ENCODE measurements at regions of chr19 and their contacts with region 1.

Region 1: GRCh38 chr19:9674663-9675357 is at the start of gene ZNF562:
- DNase-seq: peak; percentile 88 to 90
- ATAC-seq: peak; percentile 97 to 99 (median 98)
- H3K4me3 ChIP-seq: peak within 1 kb of the TSS; percentile 55 to 93 (median 74)
- H3K27ac ChIP-seq: peak within 1 kb of the TSS; percentile 84 to 98 (median 96)
- H3K4me1 ChIP-seq: peaks cover 0 to 17% (median 4%) of the 10 kb centered on the region in 9 donors
- H3K27me3 ChIP-seq: no peaks in the 10 kb centered on the region
- CTCF ChIP-seq: no peak
- total RNA-seq, gene ZNF562: 18.8 to 24.3 (median 21.5) TPM

Region 2: GRCh38 chr19:9658769-9659168 is 16.0 kb before region 1 on chr19:
- intact Hi-C with region 1: no loop called
- DNase-seq: no peak
- ATAC-seq: no peak
- H3K4me3 ChIP-seq: no peak overlapping the region
- H3K27ac ChIP-seq: no peak overlapping the region
- H3K4me1 ChIP-seq: peaks cover 0 to 14% (median 0%) of the 10 kb centered on the region in 9 donors
- H3K27me3 ChIP-seq: no peaks in the 10 kb centered on the region
- CTCF ChIP-seq: no peak

Region 3: DNA sequence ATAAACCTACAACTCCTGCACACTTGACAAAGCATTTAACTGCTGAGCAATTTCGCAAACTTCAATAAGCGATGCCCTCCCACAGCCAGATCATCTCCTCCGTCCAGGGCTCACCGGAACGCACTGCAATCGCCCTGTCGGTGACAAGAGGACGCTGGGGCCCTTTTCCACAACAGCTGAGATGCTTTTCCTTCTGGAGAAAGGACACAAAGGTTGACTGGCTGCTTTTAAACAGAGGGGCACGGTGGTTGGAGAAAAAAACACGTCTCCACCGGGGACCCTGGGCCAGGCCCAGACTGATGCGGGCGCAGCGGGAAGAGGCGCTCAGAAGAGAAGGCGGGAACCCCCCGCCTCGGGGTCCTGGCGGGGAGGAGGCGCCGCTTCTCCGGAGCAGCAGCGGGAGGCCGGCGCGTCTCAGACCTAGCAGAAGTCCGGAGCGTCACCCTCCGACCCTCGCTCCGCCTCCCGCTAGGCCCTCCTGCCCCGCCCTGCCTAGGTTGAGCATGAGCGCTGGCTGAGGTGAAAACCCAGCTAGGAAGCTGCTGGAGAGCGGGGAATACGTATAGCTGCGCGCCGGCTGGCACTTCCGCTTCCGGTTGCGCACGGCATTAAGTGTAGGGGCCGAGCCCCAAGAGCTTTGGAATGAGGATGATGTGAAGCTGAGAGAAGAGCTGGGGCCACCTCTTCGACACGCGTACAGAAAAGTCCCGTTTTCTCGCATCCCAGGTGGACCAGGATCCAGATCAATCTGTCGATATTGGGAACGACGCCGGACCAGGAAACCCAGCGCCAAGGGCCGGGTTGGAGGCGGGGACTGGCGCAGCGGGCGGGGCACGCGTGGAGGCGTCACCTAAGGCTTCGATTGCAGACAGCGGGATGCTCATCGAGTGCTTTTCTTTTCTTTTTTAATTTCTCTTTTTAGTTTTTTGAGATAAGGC is 93.6 kb after region 1 on chr19 and contains the start of gene ZNF846:
- intact Hi-C with region 1: loop called in 4 of 10 experiments (anchors 1 to 10 kb)
- DNase-seq: peak; percentile 91 to 94
- ATAC-seq: peak; percentile 98 to 100 (median 99)
- H3K4me3 ChIP-seq: peak within 1 kb of the TSS; percentile 55 to 90 (median 76)
- H3K27ac ChIP-seq: peak within 1 kb of the TSS; percentile 82 to 96 (median 93)
- H3K4me1 ChIP-seq: peaks cover 0 to 19% (median 14%) of the 10 kb centered on the region in 9 donors
- H3K27me3 ChIP-seq: no peaks in the 10 kb centered on the region
- CTCF ChIP-seq: no peak
- total RNA-seq, gene ZNF846: 6.2 to 16.2 (median 10.1) TPM

Measured in heart right ventricle (tissue), 16 donors.